ENCODE measurements at regions of chr17 and their contacts with region 1.

Region 1: GRCh38 chr17:29369831-29370735 is 20.1 kb upstream of the TAOK1 start:
- DNase-seq: peak; percentile 55
- H3K4me3 ChIP-seq: peak overlapping the region; percentile 44
- H3K27ac ChIP-seq: peak overlapping the region; percentile 34
- H3K27me3 ChIP-seq: no peaks in the 10 kb centered on the region
- CTCF ChIP-seq: peak; percentile 65

Region 2: DNA sequence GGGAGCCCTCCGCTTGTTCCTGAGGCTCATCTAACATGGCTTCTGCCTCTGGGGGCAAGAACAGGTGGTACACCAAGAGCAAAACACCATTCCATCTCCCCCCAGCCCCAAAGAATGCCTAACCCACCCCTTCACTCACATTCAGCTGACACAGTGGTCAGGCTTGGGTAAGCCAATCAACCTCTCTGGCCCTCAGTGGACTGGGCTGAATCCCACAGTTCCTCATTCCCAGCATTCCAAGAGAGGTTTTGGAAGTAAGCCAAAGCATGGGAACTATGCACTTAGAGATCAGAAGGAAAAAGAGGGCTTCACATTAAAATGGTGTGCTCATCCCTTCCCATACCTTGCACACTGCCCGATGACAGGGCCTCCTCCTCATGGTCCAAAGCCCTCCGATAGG is 806.6 kb before region 1 on chr17:
- CTCF ChIA-PET with region 1: no interaction called
- POLR2A ChIA-PET with region 1: no interaction called
- DNase-seq: no peak
- H3K4me3 ChIP-seq: no peak overlapping the region
- H3K27ac ChIP-seq: no peak overlapping the region
- H3K27me3 ChIP-seq: no peaks in the 10 kb centered on the region
- CTCF ChIP-seq: no peak

Region 3: DNA sequence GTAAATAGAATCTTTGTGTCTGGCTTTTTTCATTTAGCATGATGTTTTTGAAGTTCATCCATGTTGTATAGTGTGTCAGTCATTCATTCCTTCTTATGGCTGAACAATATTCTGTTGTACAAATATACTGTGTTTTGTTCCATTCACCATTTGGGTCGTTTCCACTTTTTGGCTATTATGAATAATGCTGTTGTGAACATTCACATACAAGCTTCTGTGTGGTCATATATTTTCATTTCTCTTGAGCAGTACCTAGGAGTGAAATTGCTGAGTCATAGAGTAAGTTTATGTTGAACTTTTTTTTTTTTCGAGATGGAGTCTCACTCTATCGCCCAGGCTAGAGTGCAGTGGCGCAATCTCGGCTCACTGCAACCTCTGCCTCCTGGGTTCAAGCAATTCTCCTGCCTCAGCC is 12.3 kb before region 1 on chr17:
- CTCF ChIA-PET with region 1: interaction called, 24 read pairs
- POLR2A ChIA-PET with region 1: no interaction called
- DNase-seq: no peak
- H3K4me3 ChIP-seq: no peak overlapping the region
- H3K27ac ChIP-seq: peak overlapping the region; percentile 42
- H3K27me3 ChIP-seq: no peaks in the 10 kb centered on the region
- CTCF ChIP-seq: no peak

Region 4: DNA sequence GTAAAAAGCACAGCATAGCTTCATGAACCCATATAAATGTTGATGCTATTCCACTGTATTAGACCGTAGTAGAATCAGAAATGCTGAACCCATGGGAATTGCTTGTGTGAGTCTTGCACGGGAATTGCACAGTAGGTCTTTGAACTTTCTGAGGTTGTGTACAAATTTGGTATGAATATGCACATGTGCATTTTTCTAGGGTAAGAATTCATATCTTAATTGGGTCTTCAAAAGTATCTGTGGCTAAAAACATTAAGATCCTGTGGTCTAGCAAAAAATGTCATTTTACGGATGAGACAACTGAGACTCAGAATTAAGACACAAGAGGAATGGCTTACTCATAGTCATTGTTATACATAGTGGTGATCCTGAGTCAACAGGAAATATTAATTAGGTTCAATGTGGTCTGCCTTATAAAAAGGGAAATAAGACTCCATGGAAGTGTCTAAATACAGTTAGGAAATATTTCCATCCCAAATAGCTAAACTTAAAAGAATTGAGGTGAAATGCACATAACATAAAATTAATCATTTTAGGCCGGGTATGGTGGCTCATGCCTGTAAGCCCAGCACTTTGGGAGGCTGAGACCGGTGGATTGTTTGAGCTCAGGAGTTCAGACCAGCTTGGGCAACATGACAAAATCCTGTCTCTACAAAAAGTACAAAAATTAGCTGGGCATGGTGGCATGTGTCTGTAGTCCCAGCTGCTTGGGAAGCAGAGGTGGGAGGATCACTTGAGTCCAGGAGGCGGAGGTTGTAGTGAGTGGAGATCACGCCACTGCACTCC is 42.9 kb after region 1 on chr17:
- CTCF ChIA-PET with region 1: interaction called, 9 read pairs
- POLR2A ChIA-PET with region 1: interaction called, 12 read pairs
- DNase-seq: peak; percentile 6
- H3K4me3 ChIP-seq: no peak overlapping the region
- H3K27ac ChIP-seq: no peak overlapping the region
- H3K27me3 ChIP-seq: no peaks in the 10 kb centered on the region
- CTCF ChIP-seq: no peak

Region 5: GRCh38 chr17:29514792-29515191 is 144.7 kb after region 1 on chr17:
- CTCF ChIA-PET with region 1: interaction called, 19 read pairs
- POLR2A ChIA-PET with region 1: no interaction called
- DNase-seq: no peak
- H3K4me3 ChIP-seq: no peak overlapping the region
- H3K27ac ChIP-seq: no peak overlapping the region
- H3K27me3 ChIP-seq: no peaks in the 10 kb centered on the region
- CTCF ChIP-seq: no peak

Region 6: DNA sequence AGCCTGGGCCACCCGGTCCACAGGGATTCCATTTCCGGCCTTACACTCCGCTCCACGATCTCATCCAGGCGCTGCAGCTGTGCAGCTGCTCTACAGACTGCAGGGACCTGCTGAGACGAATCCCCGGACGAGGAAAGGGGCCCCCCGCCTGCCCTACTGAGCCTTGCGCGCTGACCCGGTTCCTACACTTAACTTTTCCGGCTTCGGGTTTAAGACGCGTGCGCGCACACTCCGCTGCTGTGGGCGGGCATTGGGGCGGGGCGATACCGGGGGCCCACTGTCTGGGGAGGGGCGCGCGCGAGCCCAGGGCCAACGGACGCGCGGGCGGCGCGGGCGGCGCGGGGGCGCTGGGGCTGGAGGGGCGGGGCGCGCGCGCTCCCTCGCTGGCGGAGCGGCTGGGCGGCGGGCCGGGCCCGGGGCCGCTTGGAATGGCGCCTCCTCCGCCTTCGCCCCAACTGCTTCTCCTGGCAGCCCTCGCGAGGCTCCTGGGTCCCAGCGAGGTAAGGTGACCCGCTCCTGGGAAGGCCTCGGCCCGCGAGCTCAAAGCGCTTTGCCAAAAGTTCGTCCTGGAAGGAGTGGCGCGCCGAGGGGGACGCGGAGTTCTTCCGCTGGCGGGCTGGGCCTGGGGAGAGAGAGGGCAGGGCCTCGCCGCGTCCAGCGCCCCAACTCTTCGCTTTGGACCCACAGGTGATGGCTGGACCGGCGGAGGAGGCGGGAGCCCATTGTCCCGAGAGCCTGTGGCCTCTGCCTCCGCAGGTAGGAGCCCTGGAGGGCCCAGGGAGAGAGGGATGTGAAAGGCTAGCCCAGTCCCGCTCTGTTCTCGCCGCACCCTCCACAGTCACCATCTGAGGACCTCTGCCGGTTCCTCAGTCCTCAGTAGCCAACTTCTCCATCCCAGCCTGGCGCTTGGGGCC is 198.5 kb after region 1 on chr17 and contains the start of gene TP53I13:
- CTCF ChIA-PET with region 1: interaction called, 77 read pairs
- POLR2A ChIA-PET with region 1: no interaction called
- DNase-seq: no peak
- H3K4me3 ChIP-seq: peak within 1 kb of the TSS; percentile 76
- H3K27ac ChIP-seq: peak within 1 kb of the TSS; percentile 61
- H3K27me3 ChIP-seq: no peaks in the 10 kb centered on the region
- CTCF ChIP-seq: no peak
- polyA plus RNA-seq, gene TP53I13: 17.8 and 26.1 TPM in 2 replicates

Region 7: DNA sequence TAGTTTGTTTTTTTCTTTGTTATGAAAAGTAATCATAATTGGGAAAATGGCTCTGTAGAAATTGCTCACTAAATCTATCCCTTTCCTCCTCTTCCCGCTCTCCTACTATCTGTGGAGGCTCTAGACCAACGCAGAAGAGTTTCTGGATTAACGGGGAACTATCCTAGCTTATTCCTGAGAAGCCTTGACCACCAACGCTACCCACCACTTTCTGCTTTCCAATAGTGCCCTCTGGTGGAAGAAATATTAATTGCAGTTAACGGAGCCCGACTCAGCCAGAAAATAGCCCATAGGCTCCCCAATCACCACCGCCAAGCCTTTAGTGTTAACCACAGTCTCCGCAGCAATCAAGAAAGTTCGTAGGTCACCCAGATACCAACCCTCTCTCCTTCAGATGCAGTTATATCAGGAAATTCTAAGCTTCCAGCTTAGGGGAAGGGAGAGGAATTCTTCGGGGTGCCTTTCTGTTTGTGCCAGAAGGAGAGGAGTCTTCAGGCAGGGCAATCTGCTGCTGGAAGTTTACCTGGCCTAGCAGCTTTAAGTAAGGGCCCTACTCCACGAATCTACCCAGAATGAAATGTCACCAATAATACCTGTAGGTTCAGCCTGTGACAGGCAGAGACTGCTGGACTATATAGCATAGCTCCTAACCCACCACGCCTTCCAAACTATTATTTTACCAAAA is 723.5 kb after region 1 on chr17:
- CTCF ChIA-PET with region 1: interaction called, 10 read pairs
- POLR2A ChIA-PET with region 1: no interaction called
- DNase-seq: no peak
- H3K4me3 ChIP-seq: no peak overlapping the region
- H3K27ac ChIP-seq: no peak overlapping the region
- H3K27me3 ChIP-seq: peaks cover 3% of the 10 kb centered on the region
- CTCF ChIP-seq: peak; percentile 71